ENCODE measurements at regions of chr1 and their contacts with region 1.

Region 1: GRCh38 chr1:64484651-64485050 is 14.7 kb downstream of the CACHD1 start:
- DNase-seq: no peak
- ATAC-seq: no peak
- H3K4me3 ChIP-seq: no peak overlapping the region
- H3K4me3 Mint-ChIP-seq: no peak overlapping the region
- H3K27ac ChIP-seq: no peak overlapping the region
- H3K27ac Mint-ChIP-seq: no peak overlapping the region
- H3K4me1 ChIP-seq: no peaks in the 10 kb centered on the region
- H3K4me1 Mint-ChIP-seq: peaks cover 39% of the 10 kb centered on the region
- H3K27me3 ChIP-seq: peaks cover 0 to 3% of the 10 kb centered on the region in 2 experiments
- H3K27me3 Mint-ChIP-seq: peaks cover 8% of the 10 kb centered on the region
- CTCF ChIP-seq: no peak

Region 2: DNA sequence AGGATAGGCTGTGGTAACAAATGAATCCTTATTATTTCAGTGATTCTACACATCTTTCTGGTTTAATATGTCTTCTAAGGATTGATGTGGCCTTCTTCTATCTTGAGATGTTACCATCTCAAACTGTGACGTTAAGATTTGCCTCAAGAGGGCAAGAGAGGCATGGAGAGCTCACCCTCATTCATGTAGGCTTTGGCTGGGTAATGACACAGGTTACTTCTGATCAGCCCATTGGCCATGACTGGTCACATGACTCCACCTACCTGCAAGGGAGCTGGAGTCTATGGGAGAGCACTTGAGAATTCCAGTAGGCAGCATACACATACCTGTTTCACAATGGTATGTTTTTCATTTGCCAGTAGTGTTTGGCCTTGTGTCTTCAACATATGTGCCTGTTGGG is 15.3 kb after region 1 on chr1:
- CTCF ChIA-PET with region 1: interaction called, 3 read pairs
- POLR2A ChIA-PET with region 1: no interaction called
- intact Hi-C with region 1: loop called in 1 of 2 experiments (anchors 2 kb)
- DNase-seq: peak in 4 of 14 experiments; percentile 6 to 33 (median 20)
- ATAC-seq: peak; percentile 74
- H3K4me3 ChIP-seq: no peak overlapping the region
- H3K4me3 Mint-ChIP-seq: no peak overlapping the region
- H3K27ac ChIP-seq: no peak overlapping the region
- H3K27ac Mint-ChIP-seq: no peak overlapping the region
- H3K4me1 ChIP-seq: peaks cover 4% of the 10 kb centered on the region
- H3K4me1 Mint-ChIP-seq: peaks cover 24% of the 10 kb centered on the region
- H3K27me3 ChIP-seq: peaks cover 3% of the 10 kb centered on the region in 2 experiments
- H3K27me3 Mint-ChIP-seq: peaks cover 5% of the 10 kb centered on the region
- CTCF ChIP-seq: no peak

Measured in CD4-positive, alpha-beta T cell (primary cell).